IMR-90 (cell line): ENCODE measurements at regions of chr7 and their contacts with region 1.

Region 1: GRCh38 chr7:149195180-149196150 is at the start of gene ZNF282:
- DNase-seq: peak; percentile 89
- ATAC-seq: peak; percentile 98
- H3K4me3 ChIP-seq: peak within 1 kb of the TSS; percentile 75
- H3K27ac ChIP-seq: peak within 1 kb of the TSS; percentile 78
- H3K4me1 ChIP-seq: peaks cover 6% of the 10 kb centered on the region
- H3K27me3 ChIP-seq: no peaks in the 10 kb centered on the region
- CTCF ChIP-seq: peak; percentile 78
- POLR2A ChIP-seq: peak; percentile 79
- RAD21 ChIP-seq: peak; percentile 68
- total RNA-seq, gene ZNF282: 6.7 and 7.2 TPM in 2 replicates

Region 2: GRCh38 chr7:149232362-149233062 is 37.0 kb after region 1 on chr7:
- CTCF ChIA-PET with region 1: interaction called, 3 read pairs
- POLR2A ChIA-PET with region 1: no interaction called
- dilution Hi-C with region 1: no loop called
- in situ Hi-C with region 1: no loop called
- intact Hi-C with region 1: loop called (anchors 5 kb)
- DNase-seq: no peak
- ATAC-seq: no peak
- H3K4me3 ChIP-seq: no peak overlapping the region
- H3K27ac ChIP-seq: peak overlapping the region; percentile 68
- H3K4me1 ChIP-seq: peaks cover 11% of the 10 kb centered on the region
- H3K27me3 ChIP-seq: no peaks in the 10 kb centered on the region
- CTCF ChIP-seq: no peak
- POLR2A ChIP-seq: no peak
- RAD21 ChIP-seq: no peak